CD8-positive, alpha-beta T cell (primary cell): ENCODE measurements at regions of chr12 and their contacts with region 1.

Region 1: DNA sequence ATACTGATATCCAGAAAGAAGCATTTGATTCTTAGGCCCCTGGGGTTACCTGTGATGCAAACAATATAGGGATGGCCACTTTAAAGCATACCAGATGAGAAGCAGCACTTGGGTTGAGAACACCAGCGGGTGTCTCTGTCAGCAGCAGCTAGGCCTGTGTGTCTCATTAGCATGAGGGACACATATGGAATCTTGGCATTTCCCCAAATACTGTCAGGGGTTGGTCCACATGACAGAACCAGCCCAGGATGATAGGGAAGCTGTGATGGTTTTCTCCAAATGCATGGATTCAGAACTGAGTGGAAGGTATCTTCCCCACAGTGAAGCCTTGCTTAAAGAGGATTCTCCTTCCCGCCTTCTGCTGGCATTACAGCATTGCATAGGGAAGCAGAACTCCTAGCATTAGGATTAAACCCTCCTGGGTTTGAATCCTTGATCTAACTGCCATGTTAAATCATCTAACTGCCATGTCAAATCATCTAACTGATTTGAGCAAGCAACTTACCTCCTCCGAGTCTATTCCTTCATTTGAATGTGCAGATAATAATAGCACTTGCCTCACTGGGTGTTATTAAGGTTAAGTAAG is 111.5 kb upstream of the WSCD2 start:
- DNase-seq: no peak
- ATAC-seq: no peak
- H3K4me3 ChIP-seq: no peak overlapping the region
- H3K4me3 Mint-ChIP-seq: no peak overlapping the region
- H3K27ac ChIP-seq: no peak overlapping the region
- H3K27ac Mint-ChIP-seq: no peak overlapping the region
- H3K4me1 ChIP-seq: no peaks in the 10 kb centered on the region
- H3K4me1 Mint-ChIP-seq: no peaks in the 10 kb centered on the region
- H3K27me3 ChIP-seq: no peaks in the 10 kb centered on the region
- H3K27me3 Mint-ChIP-seq: peaks cover 17% of the 10 kb centered on the region
- CTCF ChIP-seq: no peak

Region 2: GRCh38 chr12:107967170-107967569 is 50.4 kb before region 1 on chr12:
- CTCF ChIA-PET with region 1: no interaction called
- POLR2A ChIA-PET with region 1: no interaction called
- intact Hi-C with region 1: no loop called
- DNase-seq: no peak
- ATAC-seq: no peak
- H3K4me3 ChIP-seq: no peak overlapping the region
- H3K4me3 Mint-ChIP-seq: no peak overlapping the region
- H3K27ac ChIP-seq: no peak overlapping the region
- H3K27ac Mint-ChIP-seq: no peak overlapping the region
- H3K4me1 ChIP-seq: no peaks in the 10 kb centered on the region
- H3K4me1 Mint-ChIP-seq: no peaks in the 10 kb centered on the region
- H3K27me3 ChIP-seq: no peaks in the 10 kb centered on the region
- H3K27me3 Mint-ChIP-seq: peaks cover 12% of the 10 kb centered on the region
- CTCF ChIP-seq: no peak

Region 3: GRCh38 chr12:107978641-107979040 is 38.9 kb before region 1 on chr12:
- CTCF ChIA-PET with region 1: no interaction called
- POLR2A ChIA-PET with region 1: no interaction called
- intact Hi-C with region 1: loop called in 1 of 2 experiments (anchors 1 kb)
- DNase-seq: no peak
- ATAC-seq: no peak
- H3K4me3 ChIP-seq: no peak overlapping the region
- H3K4me3 Mint-ChIP-seq: no peak overlapping the region
- H3K27ac ChIP-seq: no peak overlapping the region
- H3K27ac Mint-ChIP-seq: no peak overlapping the region
- H3K4me1 ChIP-seq: no peaks in the 10 kb centered on the region
- H3K4me1 Mint-ChIP-seq: no peaks in the 10 kb centered on the region
- H3K27me3 ChIP-seq: no peaks in the 10 kb centered on the region
- H3K27me3 Mint-ChIP-seq: peaks cover 41% of the 10 kb centered on the region
- CTCF ChIP-seq: no peak

Region 4: DNA sequence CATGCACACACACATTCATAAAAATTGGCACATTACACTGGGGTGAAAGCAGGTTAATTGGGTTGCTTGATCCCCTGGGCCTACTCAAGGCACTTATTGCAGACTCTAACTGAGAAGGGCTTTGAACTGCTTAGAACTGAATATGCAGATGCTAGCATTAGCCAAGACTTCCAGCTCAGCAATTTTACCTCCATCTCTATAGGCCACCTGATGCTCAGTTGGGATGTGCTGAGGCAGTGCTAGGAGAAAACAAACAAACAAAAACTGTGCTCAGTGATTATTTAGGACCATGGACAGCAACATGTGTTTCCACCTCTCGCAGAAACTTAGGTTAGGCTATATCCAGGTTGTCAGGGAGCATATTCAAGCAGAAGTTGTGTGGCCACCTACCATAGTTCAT is 13.2 kb before region 1 on chr12:
- CTCF ChIA-PET with region 1: no interaction called
- POLR2A ChIA-PET with region 1: no interaction called
- intact Hi-C with region 1: no loop called
- DNase-seq: no peak
- ATAC-seq: no peak
- H3K4me3 ChIP-seq: no peak overlapping the region
- H3K4me3 Mint-ChIP-seq: no peak overlapping the region
- H3K27ac ChIP-seq: no peak overlapping the region
- H3K27ac Mint-ChIP-seq: no peak overlapping the region
- H3K4me1 ChIP-seq: no peaks in the 10 kb centered on the region
- H3K4me1 Mint-ChIP-seq: no peaks in the 10 kb centered on the region
- H3K27me3 ChIP-seq: no peaks in the 10 kb centered on the region
- H3K27me3 Mint-ChIP-seq: peaks cover 24% of the 10 kb centered on the region
- CTCF ChIP-seq: no peak